ENCODE measurements at regions of chr20 and their contacts with region 1.

Region 1: DNA sequence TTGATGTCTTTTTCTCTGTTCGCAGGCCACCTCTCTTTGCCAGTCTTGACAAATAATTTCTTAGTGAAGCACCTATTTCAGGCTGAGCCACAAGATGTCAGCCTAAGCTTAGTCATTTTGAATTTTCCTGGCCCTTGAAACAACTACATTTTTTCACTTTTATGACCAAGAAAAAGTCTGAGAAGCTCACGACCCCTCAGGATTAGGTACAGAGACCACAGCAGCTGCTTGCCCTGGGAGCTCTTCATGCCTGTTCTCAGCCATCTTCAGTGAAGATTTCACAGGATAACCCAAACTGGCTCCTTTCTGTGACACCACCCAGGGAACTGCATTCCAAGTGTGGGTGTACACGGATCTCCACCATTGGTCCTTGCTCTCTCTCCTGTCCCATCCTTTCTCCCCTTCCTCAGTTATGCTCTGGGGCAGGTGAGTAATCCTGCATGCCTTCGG is 38.4 kb upstream of the SPTLC3 start:
- DNase-seq: no peak
- ATAC-seq: peak; percentile 52
- H3K4me3 ChIP-seq: no peak overlapping the region
- H3K27ac ChIP-seq: no peak overlapping the region
- H3K4me1 ChIP-seq: no peaks in the 10 kb centered on the region
- H3K27me3 ChIP-seq: no peaks in the 10 kb centered on the region
- CTCF ChIP-seq: peak in 2 of 3 experiments; percentile 8 to 36; a peak in 2 of 6 replicates
- POLR2A ChIP-seq: no peak
- RAD21 ChIP-seq: peak; percentile 48

Region 2: DNA sequence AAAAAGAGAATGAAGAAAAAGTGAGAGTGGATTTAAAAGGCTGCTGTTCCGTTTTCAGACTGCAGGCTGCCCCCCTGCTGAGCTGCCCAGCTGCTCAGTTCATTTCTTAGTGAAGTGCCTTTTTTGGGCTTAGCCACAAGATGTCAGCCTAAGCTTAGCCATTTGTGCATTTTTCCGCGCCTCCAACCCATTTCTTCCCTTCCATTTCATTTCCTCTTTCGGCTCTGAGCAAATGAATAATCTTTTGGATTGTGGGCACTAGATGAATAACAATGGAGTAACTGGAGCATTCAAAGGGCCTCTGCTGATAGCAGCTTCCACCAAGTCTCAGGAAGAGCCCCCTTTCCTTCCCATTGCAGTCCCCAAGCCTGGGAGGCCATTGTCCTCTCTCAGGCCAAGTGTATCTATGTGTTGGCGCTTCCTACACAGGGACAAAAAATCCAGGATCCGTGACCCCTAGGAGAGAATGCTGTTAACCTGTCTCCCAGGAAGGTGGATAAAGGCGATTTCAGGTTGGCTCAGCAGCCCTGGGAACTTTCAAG is 45.1 kb before region 1 on chr20:
- CTCF ChIA-PET with region 1: no interaction called
- POLR2A ChIA-PET with region 1: no interaction called
- RAD21 ChIA-PET with region 1: no interaction called
- intact Hi-C with region 1: loop called (anchors 1 kb)
- DNase-seq: peak; percentile 19
- ATAC-seq: peak; percentile 80
- H3K4me3 ChIP-seq: no peak overlapping the region
- H3K27ac ChIP-seq: no peak overlapping the region
- H3K4me1 ChIP-seq: no peaks in the 10 kb centered on the region
- H3K27me3 ChIP-seq: 0 out of 2 replicates have a peak, but pooled peaks cover 3% of the 10 kb centered on the region
- CTCF ChIP-seq: peak; percentile 53 to 67 (median 58); a peak in 5 of 6 replicates
- POLR2A ChIP-seq: no peak
- RAD21 ChIP-seq: peak; percentile 57

Measured in HCT116 (cell line).